CD4-positive, alpha-beta T cell (primary cell): ENCODE measurements at regions of chr1 and their contacts with region 1.

Region 1: DNA sequence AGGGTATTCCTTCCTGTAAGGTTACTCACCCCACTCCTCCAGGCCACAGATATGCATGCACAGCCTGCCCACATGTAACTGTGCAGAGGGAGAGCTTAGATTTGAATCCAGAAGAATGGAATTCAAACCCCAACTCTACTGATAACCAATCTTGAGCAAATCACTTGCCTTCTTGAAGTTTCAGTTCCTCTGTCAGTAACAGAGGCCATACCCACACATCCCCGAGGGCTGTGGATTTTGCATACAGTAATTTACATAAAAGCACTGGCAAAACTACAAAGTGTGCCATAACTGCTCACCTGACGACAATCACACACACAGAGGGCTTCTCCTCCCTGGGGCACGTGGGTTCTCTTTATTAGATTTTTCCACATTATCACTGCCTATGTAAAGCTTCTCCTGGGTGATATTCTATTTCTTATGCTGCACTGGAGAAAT is 18.6 kb downstream of the CD247 start:
- DNase-seq: peak in 4 of 14 experiments; percentile 34 to 70 (median 52)
- ATAC-seq: peak; percentile 68
- H3K4me3 ChIP-seq: no peak overlapping the region
- H3K4me3 Mint-ChIP-seq: peak overlapping the region; percentile 47
- H3K27ac ChIP-seq: peak overlapping the region; percentile 26 to 29
- H3K27ac Mint-ChIP-seq: peak overlapping the region; percentile 100
- H3K4me1 ChIP-seq: peaks cover 96% of the 10 kb centered on the region
- H3K4me1 Mint-ChIP-seq: peaks cover 99% of the 10 kb centered on the region
- H3K27me3 ChIP-seq: no peaks in the 10 kb centered on the region
- H3K27me3 Mint-ChIP-seq: no peaks in the 10 kb centered on the region
- CTCF ChIP-seq: no peak

Region 2: GRCh38 chr1:167510244-167510643 is 10.6 kb after region 1 on chr1:
- CTCF ChIA-PET with region 1: interaction called, 5 read pairs
- POLR2A ChIA-PET with region 1: interaction called, 115 read pairs
- intact Hi-C with region 1: loop called (anchors 1 to 2 kb)
- DNase-seq: peak in 2 of 14 experiments; percentile 45 to 48
- ATAC-seq: peak; percentile 27
- H3K4me3 ChIP-seq: peak overlapping the region; percentile 89
- H3K4me3 Mint-ChIP-seq: peak overlapping the region; percentile 87
- H3K27ac ChIP-seq: peak overlapping the region; percentile 27 to 72
- H3K27ac Mint-ChIP-seq: peak overlapping the region; percentile 100
- H3K4me1 ChIP-seq: peaks cover 85% of the 10 kb centered on the region
- H3K4me1 Mint-ChIP-seq: peaks cover 89% of the 10 kb centered on the region
- H3K27me3 ChIP-seq: no peaks in the 10 kb centered on the region
- H3K27me3 Mint-ChIP-seq: no peaks in the 10 kb centered on the region
- CTCF ChIP-seq: no peak

Region 3: GRCh38 chr1:167629681-167630567 is 130.2 kb after region 1 on chr1 and contains the start of gene RCSD1:
- CTCF ChIA-PET with region 1: no interaction called
- POLR2A ChIA-PET with region 1: no interaction called
- intact Hi-C with region 1: no loop called
- DNase-seq: peak in 12 of 14 experiments; percentile 23 to 79 (median 56)
- ATAC-seq: no peak
- H3K4me3 ChIP-seq: peak within 1 kb of the TSS; percentile 97
- H3K4me3 Mint-ChIP-seq: peak within 1 kb of the TSS; percentile 94
- H3K27ac ChIP-seq: peak within 1 kb of the TSS; percentile 90 to 92
- H3K27ac Mint-ChIP-seq: peak within 1 kb of the TSS; percentile 93
- H3K4me1 ChIP-seq: peaks cover 69% of the 10 kb centered on the region
- H3K4me1 Mint-ChIP-seq: peaks cover 89% of the 10 kb centered on the region
- H3K27me3 ChIP-seq: no peaks in the 10 kb centered on the region
- H3K27me3 Mint-ChIP-seq: no peaks in the 10 kb centered on the region
- CTCF ChIP-seq: no peak
- total RNA-seq, gene RCSD1: 42.3 to 44.6 TPM